Sigmoid colon (tissue), 7 donors: ENCODE measurements at regions of chr3 and their contacts with region 1.

Region 1: DNA sequence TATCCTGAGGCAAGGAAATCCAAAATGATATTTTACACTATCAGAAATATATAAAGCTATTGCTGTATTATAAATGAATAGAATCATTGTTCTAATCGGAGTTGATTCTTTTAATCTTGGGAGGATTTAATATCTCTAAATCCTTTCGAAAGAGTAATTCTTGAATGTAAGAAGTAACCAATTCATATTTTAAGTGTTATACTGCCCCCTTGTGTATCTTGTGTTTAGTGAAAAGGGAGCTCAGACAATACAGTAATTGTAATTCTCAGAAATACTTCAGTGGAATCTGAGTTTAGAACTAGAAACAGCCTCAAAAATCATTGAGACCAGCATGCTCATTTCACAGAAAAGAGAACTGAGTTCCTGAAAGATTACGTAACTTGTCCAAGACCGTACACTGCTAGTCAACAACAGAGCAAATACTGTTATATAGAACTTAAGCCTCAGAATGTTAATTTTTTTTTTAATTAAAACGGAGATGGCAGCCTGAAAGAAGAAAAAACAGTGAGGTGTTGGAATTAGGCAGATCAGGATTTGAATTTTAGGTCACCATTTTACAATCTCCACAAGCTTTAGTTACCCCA is 42.9 kb downstream of the PLCH1 start:
- DNase-seq: no peak
- H3K4me3 ChIP-seq: no peak overlapping the region
- H3K27ac ChIP-seq: peak overlapping the region in 2 of 4 donors; percentile 6 to 7
- H3K4me1 ChIP-seq: no peaks in the 10 kb centered on the region
- H3K27me3 ChIP-seq: no peaks in the 10 kb centered on the region
- CTCF ChIP-seq: peak; percentile 31 to 56 (median 46)
- EP300 ChIP-seq: no peak
- POLR2A ChIP-seq: no peak

Region 2: GRCh38 chr3:154758109-154758868 is 943.7 kb before region 1 on chr3:
- intact Hi-C with region 1: loop called (anchors 5 kb)
- DNase-seq: no peak
- H3K4me3 ChIP-seq: no peak overlapping the region
- H3K27ac ChIP-seq: no peak overlapping the region
- H3K4me1 ChIP-seq: no peaks in the 10 kb centered on the region
- H3K27me3 ChIP-seq: no peaks in the 10 kb centered on the region
- CTCF ChIP-seq: peak in 2 of 4 experiments; percentile 6 to 36
- EP300 ChIP-seq: no peak
- POLR2A ChIP-seq: no peak

Region 3: GRCh38 chr3:155352900-155353490 is 349.0 kb before region 1 on chr3:
- intact Hi-C with region 1: loop called (anchors 1 kb)
- DNase-seq: no peak
- H3K4me3 ChIP-seq: no peak overlapping the region
- H3K27ac ChIP-seq: no peak overlapping the region
- H3K4me1 ChIP-seq: no peaks in the 10 kb centered on the region
- H3K27me3 ChIP-seq: no peaks in the 10 kb centered on the region
- CTCF ChIP-seq: peak; percentile 22 to 49 (median 38)
- EP300 ChIP-seq: no peak
- POLR2A ChIP-seq: no peak

Region 4: DNA sequence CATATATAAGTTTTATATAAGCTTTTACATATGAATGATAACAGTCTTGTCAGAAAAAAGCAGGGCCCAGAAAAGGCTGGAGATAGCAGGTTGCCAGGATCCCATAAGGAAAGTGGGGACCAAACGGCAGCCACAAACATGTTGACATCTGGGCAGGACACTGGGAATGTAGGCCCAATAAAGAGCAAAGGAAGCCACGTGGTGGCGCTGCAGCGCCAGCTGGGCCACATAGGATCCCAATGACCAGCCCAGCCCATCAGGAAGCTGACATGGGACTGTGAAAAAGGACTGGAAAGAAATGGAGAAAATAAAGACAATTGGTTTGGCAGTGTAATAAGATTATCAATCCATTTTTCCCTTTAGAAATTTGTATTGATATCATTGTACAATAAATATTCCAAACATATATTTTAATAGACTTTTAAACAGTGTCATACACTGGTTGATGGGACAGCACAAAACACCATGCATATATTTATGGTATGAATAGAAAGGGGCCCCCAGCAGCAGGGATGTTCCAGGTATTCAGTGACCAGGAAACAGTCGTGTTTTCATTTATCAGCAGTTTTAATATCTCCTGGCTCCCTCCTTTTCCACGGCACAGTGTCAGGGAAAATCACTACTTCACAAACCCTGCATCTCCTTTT is 319.5 kb before region 1 on chr3:
- intact Hi-C with region 1: loop called (anchors 10 kb)
- DNase-seq: peak; percentile 69
- H3K4me3 ChIP-seq: no peak overlapping the region
- H3K27ac ChIP-seq: no peak overlapping the region
- H3K4me1 ChIP-seq: no peaks in the 10 kb centered on the region
- H3K27me3 ChIP-seq: no peaks in the 10 kb centered on the region
- CTCF ChIP-seq: peak in 2 of 4 experiments; percentile 26 to 29
- EP300 ChIP-seq: no peak
- POLR2A ChIP-seq: no peak

Region 5: GRCh38 chr3:155846119-155846518 is 144.1 kb after region 1 on chr3:
- intact Hi-C with region 1: no loop called
- DNase-seq: no peak
- H3K4me3 ChIP-seq: no peak overlapping the region
- H3K27ac ChIP-seq: no peak overlapping the region
- H3K4me1 ChIP-seq: peaks cover 0 to 51% (median 29%) of the 10 kb centered on the region in 4 donors
- H3K27me3 ChIP-seq: no peaks in the 10 kb centered on the region
- CTCF ChIP-seq: no peak
- EP300 ChIP-seq: no peak
- POLR2A ChIP-seq: no peak